K562 (cell line): ENCODE measurements at regions of chr10 and their contacts with region 1.

Region 1: DNA sequence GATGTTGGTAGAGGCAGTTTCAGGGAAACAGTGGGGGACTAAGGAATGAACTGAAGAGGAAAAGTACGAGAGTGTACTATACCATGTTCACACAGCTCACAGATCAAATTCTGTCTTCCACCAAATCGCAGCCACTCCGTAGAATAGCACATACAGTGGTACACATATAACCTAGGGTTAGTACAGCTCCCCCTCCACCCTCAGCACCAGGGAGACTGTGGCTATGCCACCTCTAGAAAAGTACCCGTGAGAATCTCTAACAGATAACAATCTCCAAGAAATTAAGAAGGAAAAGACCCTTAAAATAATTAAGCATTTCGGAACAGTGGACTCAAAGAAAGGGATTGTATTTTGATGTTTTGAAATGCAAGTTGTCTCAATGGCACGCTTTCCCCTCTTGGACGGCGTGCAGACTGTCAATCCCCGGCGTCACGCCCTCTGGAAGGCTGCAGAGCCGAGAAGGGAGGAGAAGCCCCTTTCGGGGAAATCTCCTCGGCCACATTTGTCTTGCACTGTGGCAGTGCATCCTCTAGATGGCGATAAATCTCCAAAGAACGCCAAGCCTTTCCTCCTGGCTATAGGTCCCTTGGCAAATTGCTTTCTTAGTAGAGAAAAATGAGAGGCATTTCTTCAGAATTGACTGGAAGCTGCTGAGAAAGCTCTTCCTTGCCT is 345.0 kb downstream of the REEP3 start:
- DNase-seq: peak; percentile 67 to 77 (median 74)
- ATAC-seq: peak; percentile 98
- H3K4me3 ChIP-seq: no peak overlapping the region
- H3K27ac ChIP-seq: no peak overlapping the region
- H3K4me1 ChIP-seq: no peaks in the 10 kb centered on the region
- H3K27me3 ChIP-seq: no peaks in the 10 kb centered on the region
- CTCF ChIP-seq: peak; percentile 86 to 91 (median 89)
- EP300 ChIP-seq: no peak
- POLR2A ChIP-seq: no peak
- RAD21 ChIP-seq: peak; percentile 43 to 65

Region 2: GRCh38 chr10:63801166-63801565 is 65.0 kb before region 1 on chr10:
- CTCF ChIA-PET with region 1: no interaction called
- POLR2A ChIA-PET with region 1: no interaction called
- in situ Hi-C with region 1: no loop called
- intact Hi-C with region 1: no loop called
- DNase-seq: no peak
- ATAC-seq: no peak
- H3K4me3 ChIP-seq: no peak overlapping the region
- H3K27ac ChIP-seq: no peak overlapping the region
- H3K4me1 ChIP-seq: no peaks in the 10 kb centered on the region
- H3K27me3 ChIP-seq: no peaks in the 10 kb centered on the region
- CTCF ChIP-seq: no peak
- EP300 ChIP-seq: no peak
- POLR2A ChIP-seq: no peak
- RAD21 ChIP-seq: no peak

Region 3: GRCh38 chr10:63976538-63976937 is 110.3 kb after region 1 on chr10:
- CTCF ChIA-PET with region 1: interaction called, 17 read pairs
- POLR2A ChIA-PET with region 1: interaction called, 4 read pairs
- in situ Hi-C with region 1: loop called (anchors 5 kb)
- intact Hi-C with region 1: loop called (anchors 1 kb)
- DNase-seq: peak; percentile 53 to 67 (median 62)
- ATAC-seq: peak; percentile 98
- H3K4me3 ChIP-seq: no peak overlapping the region
- H3K27ac ChIP-seq: no peak overlapping the region
- H3K4me1 ChIP-seq: peaks cover 0 to 6% of the 10 kb centered on the region in 2 experiments; a peak in 1 of 5 replicates
- H3K27me3 ChIP-seq: peaks cover 0 to 16% of the 10 kb centered on the region in 2 experiments; a peak in 2 of 5 replicates
- CTCF ChIP-seq: peak; percentile 74 to 80 (median 76)
- EP300 ChIP-seq: no peak
- POLR2A ChIP-seq: no peak
- RAD21 ChIP-seq: peak; percentile 33 to 58

Region 4: DNA sequence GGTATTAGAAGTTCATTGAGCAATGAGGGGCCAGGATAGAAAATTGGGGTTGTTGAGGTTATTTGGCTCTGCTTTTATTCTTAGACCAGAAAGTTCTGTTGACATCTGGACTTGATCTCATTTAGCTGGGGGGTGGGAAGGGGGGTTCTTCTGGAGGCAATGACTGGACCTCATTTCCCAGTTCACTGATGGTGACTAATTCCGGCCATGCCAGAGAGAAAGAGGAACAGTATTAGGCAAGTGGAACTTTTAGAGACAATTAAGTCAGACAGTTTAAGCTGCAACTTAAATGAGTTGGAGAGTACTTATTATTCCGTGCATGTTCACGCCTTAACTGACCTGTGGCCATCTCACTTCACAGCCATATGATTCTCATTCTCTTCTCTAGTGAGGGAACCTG is 167.5 kb after region 1 on chr10:
- CTCF ChIA-PET with region 1: no interaction called
- POLR2A ChIA-PET with region 1: no interaction called
- in situ Hi-C with region 1: no loop called
- intact Hi-C with region 1: loop called (anchors 5 kb)
- DNase-seq: no peak
- ATAC-seq: no peak
- H3K4me3 ChIP-seq: no peak overlapping the region
- H3K27ac ChIP-seq: no peak overlapping the region
- H3K4me1 ChIP-seq: no peaks in the 10 kb centered on the region
- H3K27me3 ChIP-seq: no peaks in the 10 kb centered on the region
- CTCF ChIP-seq: no peak
- EP300 ChIP-seq: no peak
- POLR2A ChIP-seq: no peak
- RAD21 ChIP-seq: no peak

Region 5: DNA sequence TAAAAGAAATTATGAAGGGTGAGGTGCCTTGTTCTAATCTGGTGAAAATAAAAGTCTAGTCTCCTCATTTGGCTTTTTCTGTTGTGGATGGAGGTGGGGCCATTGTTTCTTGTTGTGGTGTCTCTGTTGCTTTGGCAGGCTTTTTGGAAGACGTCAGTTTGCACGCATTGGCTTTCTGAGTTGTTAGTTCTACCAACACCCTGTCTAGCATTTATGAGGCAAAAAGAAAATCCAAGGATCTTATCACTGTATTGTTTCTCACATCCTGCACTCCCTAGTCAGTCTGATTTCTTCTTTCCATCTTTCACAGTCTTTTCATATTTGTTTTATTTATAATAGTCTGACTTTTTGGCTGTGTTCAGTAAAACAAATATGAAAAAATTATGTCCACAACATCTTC is 553.2 kb after region 1 on chr10:
- CTCF ChIA-PET with region 1: no interaction called
- POLR2A ChIA-PET with region 1: no interaction called
- in situ Hi-C with region 1: no loop called
- intact Hi-C with region 1: no loop called
- DNase-seq: no peak
- ATAC-seq: no peak
- H3K4me3 ChIP-seq: no peak overlapping the region
- H3K27ac ChIP-seq: no peak overlapping the region
- H3K4me1 ChIP-seq: no peaks in the 10 kb centered on the region
- H3K27me3 ChIP-seq: no peaks in the 10 kb centered on the region
- CTCF ChIP-seq: no peak
- EP300 ChIP-seq: no peak
- POLR2A ChIP-seq: no peak
- RAD21 ChIP-seq: no peak